ENCODE measurements at regions of chr4 and their contacts with region 1.

Region 1: GRCh38 chr4:53702334-53703266 is 111.3 kb upstream of the LNX1 start:
- DNase-seq: peak; percentile 88
- ATAC-seq: peak; percentile 80
- H3K4me3 ChIP-seq: peak overlapping the region; percentile 45
- H3K27ac ChIP-seq: peak overlapping the region; percentile 64
- H3K4me1 ChIP-seq: peaks cover 49% of the 10 kb centered on the region
- H3K27me3 ChIP-seq: no peaks in the 10 kb centered on the region
- CTCF ChIP-seq: peak; percentile 32 to 37 (median 35); a peak in 4 of 6 replicates
- EP300 ChIP-seq: peak; percentile 63 to 80; a peak in 2 of 4 replicates
- POLR2A ChIP-seq: peak; percentile 60
- RAD21 ChIP-seq: peak; percentile 24; the same call in 1 of the 2 replicates

Region 2: DNA sequence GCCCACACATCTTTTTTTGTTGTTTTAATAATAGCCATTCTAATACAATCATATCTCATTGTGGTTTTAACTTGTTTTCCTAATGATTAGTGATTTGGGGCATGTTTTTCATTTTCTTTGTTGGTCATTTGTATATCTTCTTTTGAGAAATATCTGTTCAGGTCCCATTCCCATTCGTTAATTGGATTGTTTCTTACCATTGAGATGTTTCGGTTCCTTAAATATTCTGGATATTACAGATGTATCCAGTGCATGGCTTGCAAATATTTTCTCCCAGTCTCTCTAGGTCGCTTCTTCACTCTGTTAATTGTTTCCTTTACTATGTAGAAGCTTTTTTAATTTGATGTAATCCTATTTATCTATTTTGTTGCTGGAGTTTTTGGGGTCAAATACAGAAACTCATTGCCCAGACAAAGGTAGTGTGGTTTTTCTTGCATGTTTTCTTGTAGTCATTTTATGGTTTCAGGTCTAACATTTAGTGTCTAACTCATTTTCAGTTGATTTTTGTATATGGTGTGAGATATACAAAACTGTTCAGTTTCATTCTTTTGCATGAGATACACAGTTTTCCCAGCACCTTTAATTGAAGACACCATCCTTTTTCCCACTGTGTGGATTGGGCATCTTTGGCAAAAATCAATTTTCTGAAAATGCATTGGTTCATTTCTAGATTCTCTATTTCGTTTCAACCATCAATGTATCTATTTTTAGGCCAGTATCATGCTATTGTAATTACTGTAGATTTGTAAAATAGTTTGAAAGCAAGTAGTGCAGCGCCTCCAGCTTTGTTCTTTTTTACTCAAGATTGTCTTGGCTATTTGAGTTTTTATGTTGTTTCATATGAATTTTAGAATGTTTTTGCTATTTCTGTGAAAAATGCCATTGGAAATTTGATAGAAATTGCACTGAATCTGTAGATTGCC is 532.6 kb before region 1 on chr4:
- CTCF ChIA-PET with region 1: interaction called, 3 read pairs
- POLR2A ChIA-PET with region 1: no interaction called
- RAD21 ChIA-PET with region 1: no interaction called
- SMC1A ChIA-PET with region 1: no interaction called
- in situ Hi-C with region 1: no loop called
- intact Hi-C with region 1: loop called (anchors 5 kb)
- DNase-seq: peak; percentile 45
- ATAC-seq: peak; percentile 83
- H3K4me3 ChIP-seq: no peak overlapping the region
- H3K27ac ChIP-seq: no peak overlapping the region
- H3K4me1 ChIP-seq: peaks cover 3% of the 10 kb centered on the region; the same call in 1 of the 2 replicates
- H3K27me3 ChIP-seq: no peaks in the 10 kb centered on the region
- CTCF ChIP-seq: no peak
- EP300 ChIP-seq: peak in 1 of 2 experiments; percentile 32; a peak in 2 of 4 replicates
- POLR2A ChIP-seq: no peak
- RAD21 ChIP-seq: no peak

Region 3: GRCh38 chr4:53608649-53609048 is 94.0 kb before region 1 on chr4:
- CTCF ChIA-PET with region 1: interaction called, 5 read pairs
- POLR2A ChIA-PET with region 1: no interaction called
- RAD21 ChIA-PET with region 1: interaction called, 5 read pairs
- SMC1A ChIA-PET with region 1: interaction called, 5 read pairs
- in situ Hi-C with region 1: no loop called
- intact Hi-C with region 1: loop called (anchors 2 kb)
- DNase-seq: no peak
- ATAC-seq: peak; percentile 80
- H3K4me3 ChIP-seq: no peak overlapping the region
- H3K27ac ChIP-seq: no peak overlapping the region
- H3K4me1 ChIP-seq: no peaks in the 10 kb centered on the region
- H3K27me3 ChIP-seq: no peaks in the 10 kb centered on the region
- CTCF ChIP-seq: no peak
- EP300 ChIP-seq: no peak
- POLR2A ChIP-seq: no peak
- RAD21 ChIP-seq: no peak

Region 4: DNA sequence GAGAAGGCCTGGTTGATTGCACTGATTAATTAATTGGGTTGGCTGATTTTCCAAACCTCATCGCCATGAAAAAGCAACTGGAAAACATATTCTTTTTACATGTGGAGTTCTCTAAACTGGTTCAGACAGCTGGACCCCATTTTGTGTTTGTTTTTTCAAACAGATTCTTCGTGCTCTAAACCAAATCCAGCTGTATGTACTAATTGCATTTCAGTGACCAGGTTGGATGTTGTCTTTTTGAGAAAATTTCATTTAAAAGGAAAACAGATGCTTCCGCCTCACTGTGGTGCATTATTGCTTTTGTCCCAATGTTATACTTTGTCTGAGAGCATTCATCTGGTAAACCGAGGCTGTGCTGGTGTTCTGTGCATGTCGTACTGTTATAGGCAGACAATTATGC is 43.5 kb before region 1 on chr4:
- CTCF ChIA-PET with region 1: interaction called, 112 read pairs
- POLR2A ChIA-PET with region 1: interaction called, 27 read pairs
- RAD21 ChIA-PET with region 1: interaction called, 121 read pairs
- SMC1A ChIA-PET with region 1: interaction called, 110 read pairs
- in situ Hi-C with region 1: no loop called
- intact Hi-C with region 1: no loop called
- DNase-seq: no peak
- ATAC-seq: no peak
- H3K4me3 ChIP-seq: no peak overlapping the region
- H3K27ac ChIP-seq: no peak overlapping the region
- H3K4me1 ChIP-seq: peaks cover 6% of the 10 kb centered on the region
- H3K27me3 ChIP-seq: no peaks in the 10 kb centered on the region
- CTCF ChIP-seq: no peak
- EP300 ChIP-seq: no peak
- POLR2A ChIP-seq: no peak
- RAD21 ChIP-seq: no peak

Region 5: DNA sequence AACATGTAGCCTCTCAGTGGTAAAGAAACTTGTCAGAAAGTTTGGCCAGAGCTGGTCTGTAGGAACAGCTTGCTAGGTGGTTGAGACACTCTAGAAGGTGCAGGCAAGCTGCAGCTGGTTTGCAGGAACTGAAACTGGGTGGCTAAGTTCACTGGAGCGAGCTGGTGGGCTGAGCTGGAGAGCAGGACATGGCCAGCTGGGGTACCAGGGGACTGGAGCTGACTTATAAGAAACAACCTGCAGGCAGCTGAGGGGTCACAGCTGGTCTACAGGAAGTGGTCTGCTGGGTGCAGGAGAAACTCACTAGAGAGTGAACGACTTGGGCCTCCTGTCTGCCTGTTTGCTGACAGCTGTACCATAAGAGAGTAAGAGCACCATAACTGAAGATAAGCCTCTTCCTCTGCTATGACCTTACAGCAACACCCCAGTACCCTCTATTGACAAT is 45.8 kb after region 1 on chr4:
- CTCF ChIA-PET with region 1: interaction called, 72 read pairs
- POLR2A ChIA-PET with region 1: interaction called, 8 read pairs
- RAD21 ChIA-PET with region 1: interaction called, 34 read pairs
- SMC1A ChIA-PET with region 1: interaction called, 70 read pairs
- in situ Hi-C with region 1: no loop called
- intact Hi-C with region 1: loop called (anchors 1 kb)
- DNase-seq: peak; percentile 96
- ATAC-seq: peak; percentile 99
- H3K4me3 ChIP-seq: no peak overlapping the region
- H3K27ac ChIP-seq: peak overlapping the region; percentile 71
- H3K4me1 ChIP-seq: peaks cover 29% of the 10 kb centered on the region
- H3K27me3 ChIP-seq: no peaks in the 10 kb centered on the region
- CTCF ChIP-seq: no peak
- EP300 ChIP-seq: peak; percentile 77 to 79; a peak in 3 of 4 replicates
- POLR2A ChIP-seq: no peak
- RAD21 ChIP-seq: peak; percentile 4; the same call in 1 of the 2 replicates

Region 6: DNA sequence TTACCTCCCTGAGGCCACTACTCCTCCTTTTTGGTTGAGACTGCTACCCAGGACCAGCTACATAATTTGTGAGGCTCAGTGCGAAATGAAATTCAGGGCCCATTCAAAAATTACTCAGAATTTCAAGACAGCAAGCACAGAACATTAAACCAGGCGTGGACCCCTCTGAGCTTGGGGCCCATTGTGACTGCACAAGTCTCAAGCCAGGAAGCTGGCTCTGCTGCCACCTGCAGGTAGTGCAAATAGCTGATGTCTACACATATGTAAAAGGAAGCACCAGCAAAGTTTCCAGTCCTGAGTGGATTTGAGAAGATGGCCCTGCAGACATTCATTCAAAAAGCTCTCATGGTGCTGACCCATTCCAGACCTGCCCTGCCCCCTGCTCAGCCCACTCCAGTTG is 102.1 kb after region 1 on chr4:
- CTCF ChIA-PET with region 1: interaction called, 305 read pairs
- POLR2A ChIA-PET with region 1: interaction called, 4 read pairs
- RAD21 ChIA-PET with region 1: interaction called, 118 read pairs
- SMC1A ChIA-PET with region 1: interaction called, 228 read pairs
- in situ Hi-C with region 1: no loop called
- intact Hi-C with region 1: loop called (anchors 1 kb)
- DNase-seq: peak; percentile 12
- ATAC-seq: peak; percentile 98
- H3K4me3 ChIP-seq: no peak overlapping the region
- H3K27ac ChIP-seq: no peak overlapping the region
- H3K4me1 ChIP-seq: 0 out of 2 replicates have a peak, but pooled peaks cover 3% of the 10 kb centered on the region
- H3K27me3 ChIP-seq: no peaks in the 10 kb centered on the region
- CTCF ChIP-seq: peak; percentile 65 to 74 (median 72)
- EP300 ChIP-seq: no peak
- POLR2A ChIP-seq: no peak
- RAD21 ChIP-seq: peak; percentile 77

Region 7: DNA sequence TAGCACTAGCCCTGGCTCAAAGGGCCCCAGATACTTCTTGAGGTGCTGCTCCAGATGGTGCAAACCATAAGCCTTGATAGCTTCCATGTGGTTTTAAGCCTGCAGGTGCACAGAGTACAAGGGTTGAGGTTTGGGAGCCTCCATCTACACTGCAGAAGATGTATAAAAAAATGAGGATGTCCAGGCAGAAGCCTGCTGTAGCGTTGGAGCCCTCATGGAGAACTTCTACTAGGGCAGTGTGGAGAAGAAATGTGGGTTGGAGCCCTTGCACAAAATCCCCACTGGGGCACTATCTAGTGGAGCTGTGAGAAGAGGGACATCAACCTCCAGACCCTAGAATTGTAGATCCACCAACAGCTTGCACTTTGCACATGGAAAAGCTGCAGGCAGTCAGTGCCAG is 129.9 kb after region 1 on chr4:
- CTCF ChIA-PET with region 1: no interaction called
- POLR2A ChIA-PET with region 1: no interaction called
- RAD21 ChIA-PET with region 1: no interaction called
- SMC1A ChIA-PET with region 1: no interaction called
- in situ Hi-C with region 1: no loop called
- intact Hi-C with region 1: no loop called
- DNase-seq: no peak
- ATAC-seq: no peak
- H3K4me3 ChIP-seq: no peak overlapping the region
- H3K27ac ChIP-seq: no peak overlapping the region
- H3K4me1 ChIP-seq: no peaks in the 10 kb centered on the region
- H3K27me3 ChIP-seq: no peaks in the 10 kb centered on the region
- CTCF ChIP-seq: no peak
- EP300 ChIP-seq: no peak
- POLR2A ChIP-seq: no peak
- RAD21 ChIP-seq: no peak

Region 8: GRCh38 chr4:54064295-54065111 is 361.9 kb after region 1 on chr4 and contains the start of gene CHIC2:
- CTCF ChIA-PET with region 1: interaction called, 5 read pairs
- POLR2A ChIA-PET with region 1: interaction called, 4 read pairs
- RAD21 ChIA-PET with region 1: interaction called, 4 read pairs
- SMC1A ChIA-PET with region 1: no interaction called
- in situ Hi-C with region 1: no loop called
- intact Hi-C with region 1: loop called (anchors 10 kb)
- DNase-seq: peak; percentile 63
- ATAC-seq: peak; percentile 92
- H3K4me3 ChIP-seq: peak within 1 kb of the TSS; percentile 91
- H3K27ac ChIP-seq: peak within 1 kb of the TSS; percentile 68
- H3K4me1 ChIP-seq: no peaks in the 10 kb centered on the region
- H3K27me3 ChIP-seq: no peaks in the 10 kb centered on the region
- CTCF ChIP-seq: no peak
- EP300 ChIP-seq: 0 out of 4 replicates have a peak, but pooled peaks of 1 of the 2 experiments have one; percentile 23
- POLR2A ChIP-seq: peak; percentile 95
- RAD21 ChIP-seq: no peak
- polyA plus RNA-seq, gene CHIC2: 0.80 to 2.8 TPM

Measured in GM12878 (cell line).